Head of caudate nucleus (tissue), 42 donors: ENCODE measurements at regions of chr9 and their contacts with region 1.

Region 1: DNA sequence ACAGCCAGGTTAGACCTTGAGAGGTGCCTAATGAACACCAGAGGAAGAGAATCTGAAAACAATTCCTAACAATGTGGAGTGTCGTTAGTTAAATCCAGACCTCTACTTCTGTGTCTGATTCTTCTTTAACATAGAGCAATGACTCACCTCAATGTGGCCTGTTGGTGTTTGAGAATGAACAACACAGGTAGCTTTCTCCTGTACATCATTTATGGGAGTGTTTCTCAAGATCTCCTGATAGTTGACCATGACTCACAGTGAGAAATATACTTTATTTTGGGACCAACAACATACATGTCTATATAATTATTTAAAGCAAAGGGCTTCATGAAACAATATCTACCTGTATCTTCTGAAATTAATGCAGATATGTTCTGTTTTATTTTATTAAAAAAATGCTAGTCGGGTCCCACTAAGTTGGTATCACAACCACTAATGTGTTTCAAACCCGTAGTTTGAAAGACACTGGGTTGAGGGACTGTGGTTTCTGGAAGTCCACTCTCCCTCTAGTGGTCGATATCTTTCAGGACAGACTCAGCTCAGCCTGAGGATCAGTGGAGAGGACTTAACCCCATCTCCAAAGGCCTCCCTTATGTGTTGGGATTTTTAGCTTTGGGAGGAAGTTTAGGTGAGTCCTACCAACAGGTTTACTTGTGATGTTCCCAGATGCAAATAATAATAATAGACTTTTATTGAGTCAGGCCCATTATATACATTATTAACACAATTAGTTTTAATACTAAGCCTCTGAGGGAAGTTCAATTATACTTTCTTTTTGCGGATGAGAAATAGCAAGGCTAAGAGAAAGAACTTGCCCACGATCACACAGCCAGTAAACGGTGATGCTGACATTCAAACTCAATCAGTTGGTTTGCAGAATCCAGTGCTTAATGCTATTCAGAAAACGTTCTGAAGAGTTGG is 70.0 kb upstream of the KLF9 start:
- DNase-seq: peak in 25 of 42 donors; percentile 24 to 82 (median 59)

Region 2: GRCh38 chr9:70258692-70259511 is 225.6 kb before region 1 on chr9 and contains the start of gene SMC5:
- intact Hi-C with region 1: loop called (anchors 5 kb)
- DNase-seq: peak; percentile 70 to 96 (median 90)

Region 3: DNA sequence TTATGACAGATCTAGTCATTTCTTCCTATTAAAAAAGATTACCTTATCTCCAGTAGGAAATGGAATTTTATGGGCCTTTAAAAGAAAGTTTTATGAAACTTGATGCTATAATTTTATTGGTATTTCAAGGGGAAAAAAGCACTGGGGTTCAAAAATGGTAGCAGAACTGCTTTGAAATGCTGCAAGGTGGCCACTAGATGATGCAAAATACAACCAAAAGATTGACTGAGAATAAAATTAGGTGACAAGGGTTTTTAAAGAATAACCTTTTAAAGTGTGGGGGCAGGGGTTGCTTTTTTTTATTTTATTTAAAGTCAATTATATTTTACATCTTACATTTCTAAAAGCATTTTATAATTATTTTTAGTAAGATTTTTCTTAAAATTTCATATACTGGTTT is 131.7 kb before region 1 on chr9:
- intact Hi-C with region 1: loop called (anchors 5 kb)
- DNase-seq: no peak

Region 4: GRCh38 chr9:70419546-70420266 is 64.8 kb before region 1 on chr9:
- intact Hi-C with region 1: loop called (anchors 2 kb)
- DNase-seq: peak; percentile 73 to 96 (median 88)

Region 5: DNA sequence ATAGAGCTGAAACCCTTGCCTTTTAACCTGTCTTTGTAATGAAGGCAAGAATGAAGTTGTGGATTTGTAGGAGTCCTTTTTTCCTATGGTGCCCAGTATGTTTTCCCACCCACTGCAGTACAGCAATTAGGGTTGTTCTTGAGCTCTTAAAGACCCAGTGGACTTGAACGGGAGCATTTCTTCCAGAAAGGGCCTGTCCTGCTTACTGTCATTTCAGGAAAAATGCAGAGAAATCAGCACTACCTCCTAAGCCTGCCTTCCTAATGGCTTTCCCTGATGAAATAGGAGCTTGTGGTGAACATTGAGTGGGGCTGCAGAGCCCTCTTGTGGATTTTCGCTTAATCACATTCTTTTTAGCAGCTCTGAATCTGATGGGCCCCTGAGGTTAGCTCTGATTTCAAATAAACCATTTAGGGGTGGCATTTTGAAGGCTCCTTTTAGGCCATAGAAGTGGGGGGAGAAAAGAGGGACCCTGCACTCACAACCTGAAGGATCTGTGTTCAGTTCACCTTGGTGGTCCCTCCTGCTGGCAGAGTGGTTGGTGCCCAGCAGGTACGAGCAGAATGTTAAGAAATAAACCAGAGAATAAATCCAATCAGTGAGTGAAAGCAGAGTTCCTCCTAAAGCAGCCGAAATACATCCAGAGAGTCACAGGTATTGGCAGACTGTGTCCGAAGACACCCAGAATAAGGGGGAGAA is 118.0 kb after region 1 on chr9:
- intact Hi-C with region 1: loop called (anchors 5 kb)
- DNase-seq: peak in 41 of 42 donors; percentile 32 to 87 (median 68)